Activated B cell treated with CpG ODN at 0.5 μM for 24 hours (primary cell): ENCODE measurements at regions of chr17 and their contacts with region 1.

Region 1: DNA sequence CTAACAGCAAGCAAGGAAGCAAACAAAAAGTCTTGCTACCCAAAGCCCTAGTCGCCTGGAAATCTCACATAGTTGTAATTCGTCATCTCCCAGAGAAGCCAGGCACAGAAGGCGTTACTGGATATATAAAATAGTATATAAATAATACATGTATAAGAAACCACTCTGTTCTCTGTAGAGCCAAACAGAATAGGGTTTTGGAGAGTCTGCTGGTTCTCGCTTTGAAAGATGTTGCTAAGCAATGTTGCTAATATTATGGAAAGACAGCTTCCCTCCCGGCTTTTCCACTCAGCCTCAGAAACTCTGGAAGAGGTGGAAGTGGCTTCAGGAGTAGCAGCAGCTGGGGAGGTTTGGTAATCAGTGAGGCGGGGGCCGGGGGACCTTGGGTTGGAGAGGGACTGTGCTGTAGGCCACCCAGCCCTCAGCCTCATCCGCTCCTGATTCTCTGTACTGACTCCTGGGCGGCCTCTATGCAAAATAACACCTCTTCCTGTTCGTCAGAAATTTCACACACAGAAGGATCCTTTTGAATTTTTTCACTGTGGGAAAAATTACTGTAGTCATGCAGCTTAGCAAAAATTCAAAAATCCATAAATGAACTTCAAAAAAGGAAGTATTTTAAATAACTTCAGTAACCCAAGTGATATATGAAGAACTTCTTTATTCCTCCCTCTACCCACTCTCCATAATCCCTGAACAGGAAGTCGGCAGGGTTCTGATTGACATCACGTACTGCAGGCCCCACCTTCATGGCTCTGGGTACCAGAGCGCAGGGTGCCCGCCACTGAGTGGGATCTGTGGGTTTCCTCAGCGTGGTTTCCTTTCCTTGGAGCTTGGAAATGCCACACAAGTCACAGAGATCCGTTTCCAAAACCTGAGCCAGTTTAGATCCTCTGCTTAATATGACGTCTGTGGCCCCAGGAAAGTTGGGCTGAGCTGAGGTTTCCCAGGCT is 51.4 kb downstream of the RAP1GAP2 start:
- DNase-seq: no peak
- ATAC-seq: no peak
- H3K4me3 Mint-ChIP-seq: no peak overlapping the region
- H3K27ac Mint-ChIP-seq: no peak overlapping the region
- H3K4me1 Mint-ChIP-seq: peaks cover 15% of the 10 kb centered on the region
- H3K27me3 Mint-ChIP-seq: peaks cover 31% of the 10 kb centered on the region
- CTCF ChIP-seq: no peak

Region 2: DNA sequence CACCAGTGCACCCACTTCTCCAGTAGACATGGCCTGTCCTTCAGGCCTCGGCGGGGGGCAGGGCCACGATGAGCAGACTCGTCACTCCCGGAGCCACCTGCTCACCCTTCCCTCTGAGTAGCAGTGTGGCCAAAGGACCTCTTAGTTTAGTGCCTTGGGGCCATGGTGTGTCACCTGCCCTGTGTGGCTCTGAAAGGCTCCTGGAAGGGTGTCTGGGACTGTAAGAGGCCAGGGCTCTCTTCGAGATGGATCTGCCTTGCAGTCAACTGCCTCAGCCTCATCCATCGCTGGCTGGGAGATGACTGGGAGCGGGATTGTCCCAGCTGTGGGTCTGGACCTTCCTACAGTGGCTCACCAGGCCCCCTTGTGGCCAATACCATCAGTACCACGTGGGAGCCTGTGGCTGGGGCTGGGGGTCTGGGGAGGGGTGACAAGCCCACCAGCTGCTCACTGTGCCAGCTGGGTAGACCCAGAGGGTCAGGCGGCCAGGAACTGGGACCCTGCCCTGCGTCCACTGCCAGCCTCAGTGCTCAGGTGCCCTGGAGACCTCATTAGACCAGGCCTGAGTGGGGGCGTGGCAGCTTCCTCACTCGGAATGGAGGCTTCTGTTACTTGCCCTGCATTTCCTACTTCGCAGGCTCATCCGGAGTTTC is 82.3 kb after region 1 on chr17:
- CTCF ChIA-PET with region 1: interaction called, 9 read pairs
- POLR2A ChIA-PET with region 1: no interaction called
- intact Hi-C with region 1: loop called (anchors 1 kb)
- DNase-seq: peak; percentile 36
- ATAC-seq: peak; percentile 54
- H3K4me3 Mint-ChIP-seq: no peak overlapping the region
- H3K27ac Mint-ChIP-seq: no peak overlapping the region
- H3K4me1 Mint-ChIP-seq: peaks cover 25% of the 10 kb centered on the region
- H3K27me3 Mint-ChIP-seq: no peaks in the 10 kb centered on the region
- CTCF ChIP-seq: no peak